Sciatic nerve (tissue), 2 donors: ENCODE measurements at regions of chr6 and their contacts with region 1.

Region 1: GRCh38 chr6:40188931-40189330 is 254.7 kb upstream of the MOCS1 start:
- DNase-seq: no peak
- ATAC-seq: peak; percentile 95

Region 2: GRCh38 chr6:40159865-40160264 is 29.1 kb before region 1 on chr6:
- intact Hi-C with region 1: loop called (anchors 2 kb)
- DNase-seq: no peak
- ATAC-seq: no peak

Region 3: GRCh38 chr6:40227735-40228134 is 38.8 kb after region 1 on chr6:
- intact Hi-C with region 1: no loop called
- DNase-seq: no peak
- ATAC-seq: no peak